ENCODE measurements at regions of chr3 and their contacts with region 1.

Region 1: DNA sequence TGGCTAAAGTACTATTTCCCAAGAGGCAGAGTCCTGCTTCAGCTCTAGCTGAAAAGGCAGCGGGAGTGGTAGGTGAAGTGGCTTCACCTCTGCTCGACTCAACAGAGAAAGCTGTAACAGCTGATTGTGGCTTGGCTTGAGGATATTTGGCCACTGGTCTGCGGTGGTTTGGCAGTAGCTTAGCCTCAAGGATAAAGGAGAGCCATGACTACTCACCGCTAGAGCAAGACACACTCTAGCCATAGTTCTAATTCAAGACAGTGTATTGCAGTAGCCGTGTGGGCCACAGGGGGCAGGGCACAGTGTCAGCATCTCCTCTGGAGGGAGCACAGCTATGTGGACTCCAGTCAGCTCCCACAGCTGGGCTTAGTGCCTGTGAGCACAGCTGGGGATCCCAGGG is 23.5 kb downstream of the TPRG1 start:
- DNase-seq: no peak
- H3K27ac ChIP-seq: no peak overlapping the region
- CTCF ChIP-seq: no peak

Region 2: DNA sequence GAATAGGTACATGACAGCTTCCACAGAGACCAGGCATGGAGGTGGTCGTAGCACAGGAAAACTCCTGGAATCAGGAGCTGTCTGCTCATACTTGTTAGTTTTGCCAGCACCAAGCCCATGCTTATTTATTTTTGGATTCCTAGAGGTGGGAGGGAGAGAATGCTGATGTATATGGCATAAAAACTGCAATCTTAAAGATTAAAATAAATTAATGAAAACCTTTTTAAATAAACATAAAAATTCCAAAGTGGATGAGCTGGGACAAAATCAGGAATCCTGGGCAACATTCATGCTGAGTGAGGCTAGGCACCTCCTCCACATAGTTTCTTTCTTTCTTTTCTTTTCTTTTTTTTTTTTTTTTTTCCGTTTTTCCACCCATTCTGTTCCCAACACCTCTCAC is 1435.7 kb before region 1 on chr3:
- CTCF ChIA-PET with region 1: interaction called, 12 read pairs
- POLR2A ChIA-PET with region 1: no interaction called
- DNase-seq: no peak
- H3K27ac ChIP-seq: no peak overlapping the region
- CTCF ChIP-seq: no peak

Region 3: DNA sequence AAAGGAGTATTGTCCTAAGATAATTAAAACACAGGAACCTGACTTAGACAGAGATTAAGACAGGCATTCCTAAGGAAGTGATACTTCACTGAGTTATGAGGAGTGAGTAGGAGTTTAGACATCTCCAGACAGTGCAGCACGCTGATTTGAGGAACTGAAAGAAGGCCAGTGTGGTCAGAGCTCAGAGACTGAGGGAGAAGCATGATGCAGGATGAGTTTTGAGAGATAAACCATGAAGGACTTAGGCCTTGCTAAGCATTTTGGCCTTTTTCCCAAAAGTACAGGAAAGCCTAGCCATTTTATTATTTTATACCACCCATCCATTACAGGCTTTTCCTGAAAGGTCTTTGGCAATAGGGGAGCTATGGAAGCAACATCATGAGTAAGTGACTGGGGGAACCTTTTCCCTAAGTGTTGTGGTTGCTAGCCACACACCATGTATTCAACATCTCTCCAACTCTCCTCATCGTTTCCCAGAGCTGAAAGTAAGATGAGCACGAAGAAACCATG is 399.1 kb before region 1 on chr3:
- CTCF ChIA-PET with region 1: no interaction called
- POLR2A ChIA-PET with region 1: no interaction called
- DNase-seq: no peak
- H3K27ac ChIP-seq: no peak overlapping the region
- CTCF ChIP-seq: no peak

Region 4: DNA sequence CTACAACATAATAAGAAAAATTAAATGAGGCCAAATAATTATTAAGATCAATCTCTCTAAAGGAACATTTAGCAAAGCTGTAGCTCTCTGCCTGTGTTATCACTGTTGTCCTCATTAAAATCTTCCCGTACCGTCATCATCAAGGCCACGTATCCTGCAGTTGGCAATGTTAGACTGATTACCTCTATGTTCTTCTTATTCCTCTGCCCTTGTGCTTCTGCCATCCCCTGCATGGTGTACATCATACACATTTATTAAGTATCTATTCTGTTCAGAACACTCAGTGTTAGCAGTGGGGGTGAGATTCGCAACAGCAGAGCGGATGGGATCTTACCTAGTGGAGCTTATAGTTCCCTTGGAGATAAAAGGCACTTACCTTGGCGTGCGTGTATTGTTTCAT is 10.7 kb before region 1 on chr3:
- CTCF ChIA-PET with region 1: no interaction called
- POLR2A ChIA-PET with region 1: no interaction called
- DNase-seq: no peak
- H3K27ac ChIP-seq: no peak overlapping the region
- CTCF ChIP-seq: no peak

Measured in RWPE1 (cell line).